ENCODE measurements at regions of chr18 and their contacts with region 1.

Region 1: GRCh38 chr18:5979971-5980457 is 84.7 kb upstream of the TMEM200C start:
- DNase-seq: no peak
- H3K4me3 ChIP-seq: no peak overlapping the region
- H3K27ac ChIP-seq: no peak overlapping the region
- H3K4me1 ChIP-seq: no peaks in the 10 kb centered on the region
- H3K27me3 ChIP-seq: no peaks in the 10 kb centered on the region
- CTCF ChIP-seq: no peak
- EP300 ChIP-seq: no peak
- POLR2A ChIP-seq: no peak

Region 2: DNA sequence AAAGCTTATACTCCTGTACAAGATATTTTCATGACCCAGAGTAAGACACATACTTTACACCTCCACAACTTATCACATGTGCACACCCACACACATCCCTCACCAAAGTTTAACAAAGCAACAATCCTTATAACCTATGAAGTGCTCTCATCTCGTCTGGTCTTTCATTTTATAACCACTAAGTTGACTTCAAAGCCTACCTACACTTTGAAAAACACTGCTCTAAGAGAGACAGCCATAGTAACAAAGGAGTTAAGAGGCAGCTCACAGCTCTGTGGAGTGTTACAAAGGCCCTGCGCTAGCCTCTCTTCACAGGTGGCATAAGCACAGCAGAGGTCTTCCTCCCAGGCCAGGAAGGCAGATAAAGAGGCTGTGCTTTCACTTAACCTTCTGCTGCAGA is 15.0 kb before region 1 on chr18:
- in situ Hi-C with region 1: no loop called
- intact Hi-C with region 1: loop called (anchors 1 kb)
- DNase-seq: no peak
- H3K4me3 ChIP-seq: no peak overlapping the region
- H3K27ac ChIP-seq: no peak overlapping the region
- H3K4me1 ChIP-seq: peaks cover 0 to 15% (median 0%) of the 10 kb centered on the region in 4 donors
- H3K27me3 ChIP-seq: no peaks in the 10 kb centered on the region
- CTCF ChIP-seq: no peak
- EP300 ChIP-seq: no peak
- POLR2A ChIP-seq: no peak

Measured in transverse colon (tissue), 4 donors.